Activated CD8-positive, alpha-beta T cell treated with anti-CD3 and anti-CD28 coated beads, Interleukin-2, amount 10 ng/mL, durations not matched to agents 7 days and 5 days (primary cell): ENCODE measurements at regions of chr17 and their contacts with region 1.

Region 1: DNA sequence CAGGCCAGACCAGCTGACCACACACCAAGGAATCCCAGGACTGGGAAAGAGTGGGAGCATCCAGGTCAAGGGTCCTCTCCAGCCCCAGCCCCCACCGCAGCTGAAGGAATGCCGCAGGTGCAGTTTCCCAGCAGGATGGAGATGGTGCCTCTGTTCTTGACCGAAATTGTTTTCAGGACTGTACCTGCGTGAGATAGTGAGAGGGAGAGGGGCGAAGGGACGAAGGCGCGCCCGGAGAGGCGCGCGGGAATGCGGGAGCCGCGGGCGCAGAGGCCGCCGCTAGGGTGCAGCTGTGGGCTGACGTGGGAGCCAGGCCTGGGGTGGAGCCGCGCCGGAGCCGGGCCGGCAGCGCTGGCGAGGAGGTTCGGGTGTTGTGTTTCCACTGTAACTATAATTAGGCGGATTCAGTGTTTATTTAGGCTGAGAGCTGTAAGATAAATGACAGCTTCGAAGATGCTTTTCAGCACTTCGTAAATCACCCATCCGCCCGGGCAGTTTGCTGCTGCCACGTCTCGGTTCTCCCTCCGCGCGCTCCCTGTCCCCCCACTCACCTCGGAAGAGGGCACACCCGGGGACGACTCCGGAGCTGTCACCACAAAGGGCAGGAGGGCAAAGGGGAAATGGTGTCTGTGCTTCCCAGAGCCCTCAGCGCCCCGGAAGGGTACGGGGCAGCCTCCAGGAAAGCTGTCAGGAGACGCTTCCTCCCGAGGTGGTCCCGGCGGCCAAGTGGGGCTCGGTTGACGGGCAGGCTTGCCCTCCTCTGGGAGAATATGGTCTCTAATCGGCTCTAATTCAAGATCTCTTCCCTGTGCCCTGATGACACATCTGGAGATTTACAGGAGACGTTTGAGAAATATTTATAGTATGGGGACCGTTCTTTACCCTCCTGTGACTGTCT is 38.2 kb downstream of the HOXB1 start:
- DNase-seq: peak; percentile 75
- ATAC-seq: peak; percentile 96
- H3K4me3 Mint-ChIP-seq: peak overlapping the region; percentile 65
- H3K27ac Mint-ChIP-seq: no peak overlapping the region
- H3K4me1 Mint-ChIP-seq: peaks cover 39% of the 10 kb centered on the region
- H3K27me3 Mint-ChIP-seq: peaks cover 23% of the 10 kb centered on the region

Region 2: GRCh38 chr17:48335858-48336500 is 156.7 kb before region 1 on chr17:
- CTCF ChIA-PET with region 1: interaction called, 12 read pairs
- POLR2A ChIA-PET with region 1: no interaction called
- DNase-seq: no peak
- ATAC-seq: peak; percentile 47
- H3K4me3 Mint-ChIP-seq: no peak overlapping the region
- H3K27ac Mint-ChIP-seq: no peak overlapping the region
- H3K4me1 Mint-ChIP-seq: peaks cover 5% of the 10 kb centered on the region
- H3K27me3 Mint-ChIP-seq: no peaks in the 10 kb centered on the region

Region 3: GRCh38 chr17:48478224-48479013 is 14.2 kb before region 1 on chr17:
- CTCF ChIA-PET with region 1: interaction called, 19 read pairs
- POLR2A ChIA-PET with region 1: interaction called, 3 read pairs
- DNase-seq: peak; percentile 55
- ATAC-seq: peak; percentile 85
- H3K4me3 Mint-ChIP-seq: no peak overlapping the region
- H3K27ac Mint-ChIP-seq: peak overlapping the region; percentile 76
- H3K4me1 Mint-ChIP-seq: peaks cover 32% of the 10 kb centered on the region
- H3K27me3 Mint-ChIP-seq: peaks cover 2% of the 10 kb centered on the region

Region 4: GRCh38 chr17:48513097-48513496 is 20.4 kb after region 1 on chr17:
- CTCF ChIA-PET with region 1: interaction called, 60 read pairs
- POLR2A ChIA-PET with region 1: interaction called, 3 read pairs
- DNase-seq: peak; percentile 52
- ATAC-seq: peak; percentile 62
- H3K4me3 Mint-ChIP-seq: peak overlapping the region; percentile 49
- H3K27ac Mint-ChIP-seq: peak overlapping the region; percentile 82
- H3K4me1 Mint-ChIP-seq: peaks cover 52% of the 10 kb centered on the region
- H3K27me3 Mint-ChIP-seq: peaks cover 32% of the 10 kb centered on the region

Region 5: DNA sequence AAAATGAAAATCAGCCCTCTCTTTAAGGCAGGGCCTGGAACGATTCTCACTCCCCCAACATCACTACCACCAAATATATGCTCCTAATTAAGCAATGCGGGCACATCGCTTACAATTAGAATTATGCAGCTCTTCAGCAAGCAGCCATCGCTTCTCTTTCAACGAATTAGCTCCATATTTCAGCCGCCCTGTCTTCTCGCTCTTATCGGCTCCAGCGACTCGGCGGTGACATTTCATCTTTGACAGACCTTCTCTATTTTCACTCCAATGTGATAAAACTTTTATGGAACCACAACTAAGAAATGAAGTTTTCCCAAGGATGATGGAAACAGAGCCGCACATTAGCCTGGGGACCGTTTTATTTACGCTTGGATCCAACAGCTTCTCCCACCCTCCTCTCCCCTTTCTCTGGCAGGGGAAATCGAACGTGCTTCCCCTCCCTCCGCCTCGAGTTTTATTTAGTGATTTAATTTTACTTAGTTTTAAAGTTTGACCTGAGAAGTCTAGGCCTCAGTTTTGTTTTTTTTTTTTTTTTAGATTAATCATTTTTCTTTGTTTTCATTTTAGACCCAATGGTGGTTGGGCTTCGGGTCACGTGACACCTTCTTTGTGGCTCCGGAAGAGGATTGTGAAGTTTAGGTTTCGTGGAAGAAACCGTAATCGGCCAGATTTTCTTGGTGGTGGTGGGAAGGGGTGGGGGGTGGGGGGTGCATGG is 55.3 kb after region 1 on chr17:
- CTCF ChIA-PET with region 1: interaction called, 28 read pairs
- POLR2A ChIA-PET with region 1: no interaction called
- DNase-seq: peak; percentile 68
- ATAC-seq: no peak
- H3K4me3 Mint-ChIP-seq: peak overlapping the region; percentile 64
- H3K27ac Mint-ChIP-seq: peak overlapping the region; percentile 81
- H3K4me1 Mint-ChIP-seq: peaks cover 48% of the 10 kb centered on the region
- H3K27me3 Mint-ChIP-seq: peaks cover 2% of the 10 kb centered on the region

Region 6: DNA sequence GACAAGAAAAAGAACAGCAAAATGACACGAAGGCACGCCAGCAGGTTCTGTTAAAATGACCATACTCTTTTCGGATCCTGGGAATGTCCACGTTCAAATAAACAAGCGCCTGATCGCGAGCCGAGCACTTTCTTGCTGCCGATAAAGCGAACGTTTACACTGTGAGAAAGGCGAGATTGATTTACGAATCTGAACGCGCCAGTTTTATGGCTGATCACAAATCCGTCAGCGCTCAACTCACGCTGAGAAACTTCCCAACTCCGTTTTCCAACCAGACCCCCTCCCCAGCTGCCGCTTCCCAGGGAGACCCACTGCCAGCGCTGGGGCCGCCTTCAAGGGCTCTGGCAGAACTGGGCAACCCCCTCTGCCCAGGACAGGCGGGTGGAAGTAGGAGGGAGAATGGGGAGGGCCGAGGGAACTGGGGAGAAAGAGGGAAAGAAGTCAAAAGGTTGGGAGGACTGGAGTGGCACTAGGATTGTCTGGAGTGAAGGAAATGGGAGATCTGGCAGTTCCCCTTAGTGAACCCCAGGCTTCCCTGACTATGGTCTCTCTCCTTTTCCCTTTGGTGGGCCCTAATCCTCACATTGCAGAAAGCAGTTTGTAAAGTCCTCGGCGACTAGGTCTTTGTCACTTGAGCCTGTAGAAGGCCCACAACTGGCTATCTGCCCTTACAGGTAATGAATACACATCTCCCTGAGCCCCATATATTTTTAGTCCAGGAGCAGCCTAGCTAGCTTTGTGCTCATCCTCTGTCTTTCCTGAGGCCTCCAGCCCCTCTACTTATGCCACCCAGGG is 78.6 kb after region 1 on chr17:
- CTCF ChIA-PET with region 1: no interaction called
- POLR2A ChIA-PET with region 1: no interaction called
- DNase-seq: no peak
- ATAC-seq: no peak
- H3K4me3 Mint-ChIP-seq: no peak overlapping the region
- H3K27ac Mint-ChIP-seq: no peak overlapping the region
- H3K4me1 Mint-ChIP-seq: peaks cover 20% of the 10 kb centered on the region
- H3K27me3 Mint-ChIP-seq: peaks cover 6% of the 10 kb centered on the region